MCF 10A (cell line): ENCODE measurements at regions of chr2 and their contacts with region 1.

Region 1: DNA sequence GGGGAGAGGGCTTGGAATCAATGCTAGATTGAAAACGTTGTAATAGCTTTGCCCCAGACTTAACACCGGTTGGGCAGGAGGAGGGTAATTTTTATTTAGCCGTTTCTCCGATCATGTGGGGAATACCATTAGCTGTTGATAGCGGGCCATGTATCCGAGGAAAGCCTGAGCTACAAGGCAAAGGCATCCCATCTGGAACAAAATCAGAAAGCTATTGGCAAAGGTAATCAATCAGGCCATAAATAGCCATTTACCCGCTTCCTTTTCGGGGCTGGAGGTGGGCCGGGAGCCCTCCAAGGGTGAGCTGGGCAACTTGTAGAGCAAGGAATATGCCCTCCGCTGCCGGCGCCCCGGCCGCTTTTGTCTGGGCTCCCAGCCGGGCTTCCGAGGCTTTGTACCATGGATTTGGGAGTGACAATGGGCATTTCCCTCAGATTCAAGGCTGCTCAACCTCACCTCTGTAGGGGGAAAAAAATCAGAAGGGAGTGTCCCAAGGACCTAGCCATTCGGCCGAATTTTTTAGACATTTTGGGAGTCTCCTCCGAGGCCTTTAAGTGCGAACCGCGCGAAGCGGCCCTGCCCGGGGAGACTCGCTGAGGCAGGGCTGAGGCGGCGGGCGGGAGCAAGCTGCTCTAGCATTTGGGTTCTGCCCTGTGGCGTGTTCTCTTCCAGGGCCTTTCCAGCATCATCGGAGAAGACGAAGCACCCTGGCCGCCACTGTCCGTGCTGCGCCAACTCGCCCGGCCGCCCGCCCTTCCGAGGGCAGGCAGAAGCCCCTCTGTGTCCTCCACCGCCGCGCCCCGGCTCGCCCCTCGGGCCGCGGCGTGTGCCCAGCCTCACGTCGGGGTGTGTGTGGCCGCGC is 1.1 kb upstream of the HOXD9 start:
- DNase-seq: no peak
- H3K4me3 Mint-ChIP-seq: no peak overlapping the region
- H3K27ac Mint-ChIP-seq: no peak overlapping the region
- H3K4me1 Mint-ChIP-seq: no peaks in the 10 kb centered on the region
- H3K27me3 Mint-ChIP-seq: peaks cover 55% of the 10 kb centered on the region
- CTCF ChIP-seq: no peak

Region 2: GRCh38 chr2:176110975-176111663 is 10.3 kb before region 1 on chr2:
- CTCF ChIA-PET with region 1: interaction called, 23 read pairs
- POLR2A ChIA-PET with region 1: interaction called, 3 read pairs
- intact Hi-C with region 1: no loop called
- DNase-seq: peak; percentile 58
- H3K4me3 Mint-ChIP-seq: no peak overlapping the region
- H3K27ac Mint-ChIP-seq: no peak overlapping the region
- H3K4me1 Mint-ChIP-seq: peaks cover 4% of the 10 kb centered on the region
- H3K27me3 Mint-ChIP-seq: peaks cover 8% of the 10 kb centered on the region
- CTCF ChIP-seq: peak; percentile 56